ENCODE measurements at regions of chr6 and their contacts with region 1.

Region 1: DNA sequence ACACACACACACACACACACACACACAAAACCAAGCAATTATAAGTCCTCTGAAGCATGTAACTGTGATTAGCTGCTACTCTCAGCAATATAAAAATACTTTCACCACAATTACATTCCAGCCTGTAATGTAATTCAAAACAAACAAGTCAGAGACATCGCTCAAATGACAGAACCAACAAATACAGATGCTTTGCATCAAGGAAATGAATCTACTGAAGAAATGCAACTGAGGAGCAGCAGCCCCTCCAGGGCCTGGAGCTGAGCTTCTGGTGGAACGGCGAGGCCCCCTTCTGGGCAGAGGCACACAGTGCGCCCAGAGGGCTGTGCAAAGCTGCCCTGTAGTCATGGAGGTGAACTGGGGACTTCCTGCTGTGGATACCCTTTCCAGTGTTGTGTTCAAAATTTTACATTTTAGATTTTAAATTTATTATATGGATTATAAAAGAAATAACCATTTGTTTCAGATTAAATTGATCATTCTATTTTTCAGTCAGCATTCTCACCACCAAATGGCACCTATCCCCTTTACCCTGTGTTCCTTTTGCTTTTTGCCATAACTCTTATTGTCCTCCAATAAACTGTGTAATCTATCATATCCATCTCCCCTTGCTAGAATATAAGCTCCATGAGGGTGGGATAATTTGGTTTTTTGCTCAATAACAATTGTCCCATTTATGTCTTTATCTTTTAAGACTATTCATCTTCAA is 23.2 kb downstream of the ADAT2 start:
- DNase-seq: peak; percentile 55
- H3K4me3 Mint-ChIP-seq: no peak overlapping the region
- H3K27ac Mint-ChIP-seq: no peak overlapping the region
- H3K4me1 Mint-ChIP-seq: no peaks in the 10 kb centered on the region
- H3K27me3 Mint-ChIP-seq: no peaks in the 10 kb centered on the region

Region 2: DNA sequence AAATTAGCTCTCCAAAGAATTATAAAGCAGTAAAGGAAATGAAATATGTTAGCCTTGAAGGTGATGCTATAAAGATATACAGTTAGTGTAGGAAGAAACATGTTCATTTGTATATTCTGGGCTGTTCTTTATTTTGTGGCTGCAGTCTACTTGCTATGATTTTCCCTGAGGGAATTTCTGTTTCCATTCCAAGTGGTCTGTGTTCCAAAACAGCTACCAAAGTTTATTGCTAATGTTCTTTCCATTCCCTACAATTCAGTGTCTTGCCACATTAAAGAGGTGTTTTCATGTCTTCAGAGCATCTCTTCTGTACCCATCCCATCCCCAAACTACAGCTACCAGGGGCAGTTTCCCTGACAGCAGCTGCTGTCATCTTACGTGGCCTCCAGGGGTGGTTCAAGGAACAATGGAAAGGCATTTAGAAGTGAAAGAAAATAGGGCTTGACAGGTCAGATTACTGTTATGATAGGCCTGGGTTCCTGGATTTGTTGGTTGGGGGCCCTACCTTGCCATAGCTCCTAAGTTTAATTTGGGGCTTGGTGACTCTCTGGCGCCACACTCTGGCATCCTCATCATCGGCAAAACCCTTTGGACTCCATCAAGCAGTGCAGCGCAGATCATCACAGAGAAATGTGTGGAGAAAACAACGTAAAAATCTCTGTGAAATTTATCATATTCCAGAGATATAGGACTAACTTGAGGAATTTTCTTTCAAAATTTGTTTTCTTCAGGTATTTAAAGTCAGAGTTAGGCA is 400.4 kb before region 1 on chr6:
- intact Hi-C with region 1: loop called (anchors 5 kb)
- DNase-seq: peak; percentile 9
- H3K4me3 Mint-ChIP-seq: no peak overlapping the region
- H3K27ac Mint-ChIP-seq: no peak overlapping the region
- H3K4me1 Mint-ChIP-seq: peaks cover 11% of the 10 kb centered on the region
- H3K27me3 Mint-ChIP-seq: no peaks in the 10 kb centered on the region

Region 3: GRCh38 chr6:143232849-143233248 is 194.4 kb before region 1 on chr6:
- intact Hi-C with region 1: loop called (anchors 1 kb)
- DNase-seq: peak; percentile 4
- H3K4me3 Mint-ChIP-seq: no peak overlapping the region
- H3K27ac Mint-ChIP-seq: no peak overlapping the region
- H3K4me1 Mint-ChIP-seq: no peaks in the 10 kb centered on the region
- H3K27me3 Mint-ChIP-seq: no peaks in the 10 kb centered on the region

Region 4: DNA sequence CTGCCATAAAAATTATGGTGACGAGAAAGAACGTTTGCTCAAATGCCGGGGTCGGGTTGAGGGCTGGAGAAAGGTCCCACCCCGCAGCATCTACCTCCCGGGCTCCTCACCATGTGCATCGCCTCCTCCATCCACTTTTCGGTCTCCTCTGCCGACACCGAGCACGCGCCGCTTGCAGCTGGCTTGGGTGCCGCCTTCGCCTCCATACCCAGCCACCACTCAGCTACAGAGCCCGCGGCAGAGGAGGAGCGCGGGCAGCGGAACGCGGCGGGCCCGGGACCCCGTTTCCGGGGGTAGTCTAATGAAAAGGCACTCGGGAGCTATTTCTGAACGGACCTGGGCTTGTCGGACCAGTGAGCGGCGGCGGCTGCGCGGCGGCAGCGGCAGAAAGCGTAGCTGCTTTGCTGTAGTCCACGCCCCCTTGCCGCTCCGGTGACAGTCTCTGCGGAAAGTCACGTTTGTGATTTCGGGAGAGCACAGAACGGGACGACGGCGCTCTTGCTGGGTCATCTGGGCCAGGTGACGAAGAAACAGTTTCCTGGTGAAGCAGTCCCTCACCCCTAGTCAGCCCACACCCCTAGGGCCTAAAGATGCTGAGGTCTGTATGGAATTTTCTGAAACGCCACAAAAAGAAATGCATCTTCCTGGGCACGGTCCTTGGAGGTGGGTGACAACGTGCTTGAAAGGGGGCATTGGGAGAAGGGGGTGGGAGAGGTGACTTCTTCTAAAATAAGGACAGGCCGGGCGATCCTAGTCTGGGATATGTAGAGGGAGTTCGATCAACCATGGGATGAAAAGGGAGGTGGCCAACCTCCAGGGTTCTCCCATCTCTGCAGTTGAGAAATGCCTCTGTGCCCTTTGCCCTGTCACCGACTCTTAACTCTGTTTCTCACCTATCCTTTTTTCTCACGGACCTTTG is 23.4 kb after region 1 on chr6 and contains the starts of genes ADAT2 and PEX3:
- intact Hi-C with region 1: no loop called
- DNase-seq: peak; percentile 92
- H3K4me3 Mint-ChIP-seq: peak within 1 kb of the TSS; percentile 98
- H3K27ac Mint-ChIP-seq: peak within 1 kb of the TSS; percentile 99
- H3K4me1 Mint-ChIP-seq: peaks cover 50% of the 10 kb centered on the region
- H3K27me3 Mint-ChIP-seq: no peaks in the 10 kb centered on the region
- total RNA-seq, gene ADAT2: 39.0 and 43.6 TPM in 2 replicates
- total RNA-seq, gene PEX3: 23.6 and 25.0 TPM in 2 replicates